ENCODE measurements at regions of chrX and their contacts with region 1.

Region 1: GRCh38 chrX:67724359-67725110 is 180.7 kb downstream of the AR start:
- DNase-seq: no peak
- H3K4me3 ChIP-seq: no peak overlapping the region
- H3K27ac ChIP-seq: no peak overlapping the region
- H3K4me1 ChIP-seq: no peaks in the 10 kb centered on the region
- CTCF ChIP-seq: no peak

Region 2: GRCh38 chrX:67780694-67781109 is 56.2 kb after region 1 on chrX:
- CTCF ChIA-PET with region 1: no interaction called
- POLR2A ChIA-PET with region 1: interaction called, 3 read pairs
- intact Hi-C with region 1: loop called (anchors 10 kb)
- DNase-seq: no peak
- H3K4me3 ChIP-seq: no peak overlapping the region
- H3K27ac ChIP-seq: no peak overlapping the region
- H3K4me1 ChIP-seq: no peaks in the 10 kb centered on the region
- CTCF ChIP-seq: no peak

Region 3: GRCh38 chrX:68163441-68163840 is 438.9 kb after region 1 on chrX:
- CTCF ChIA-PET with region 1: no interaction called
- POLR2A ChIA-PET with region 1: no interaction called
- intact Hi-C with region 1: no loop called
- DNase-seq: no peak
- H3K4me3 ChIP-seq: no peak overlapping the region
- H3K27ac ChIP-seq: no peak overlapping the region
- H3K4me1 ChIP-seq: no peaks in the 10 kb centered on the region
- CTCF ChIP-seq: no peak

Region 4: DNA sequence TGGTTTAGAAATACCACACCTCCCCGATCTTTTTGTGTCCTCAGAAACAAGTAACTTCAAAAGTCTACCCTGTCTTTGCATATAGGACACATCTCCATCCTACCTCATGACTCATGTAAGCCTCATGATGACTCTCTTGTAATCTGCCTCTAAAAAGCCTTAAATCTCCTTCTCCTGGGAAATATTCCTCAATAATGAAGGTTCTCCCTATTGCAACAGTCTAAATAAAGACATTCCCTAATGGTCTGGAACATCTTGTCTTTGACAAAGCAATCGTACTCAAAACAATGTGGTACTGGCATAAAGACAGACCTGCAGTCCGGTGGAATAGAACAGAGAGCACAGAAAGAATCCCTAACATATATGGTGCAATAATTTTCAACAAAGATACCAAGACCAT is 451.0 kb after region 1 on chrX:
- CTCF ChIA-PET with region 1: no interaction called
- POLR2A ChIA-PET with region 1: no interaction called
- intact Hi-C with region 1: no loop called
- DNase-seq: no peak
- H3K4me3 ChIP-seq: no peak overlapping the region
- H3K27ac ChIP-seq: no peak overlapping the region
- H3K4me1 ChIP-seq: no peaks in the 10 kb centered on the region
- CTCF ChIP-seq: no peak

Measured in OCI-LY7 (cell line).